ENCODE measurements at regions of chr22 and their contacts with region 1.

Region 1: DNA sequence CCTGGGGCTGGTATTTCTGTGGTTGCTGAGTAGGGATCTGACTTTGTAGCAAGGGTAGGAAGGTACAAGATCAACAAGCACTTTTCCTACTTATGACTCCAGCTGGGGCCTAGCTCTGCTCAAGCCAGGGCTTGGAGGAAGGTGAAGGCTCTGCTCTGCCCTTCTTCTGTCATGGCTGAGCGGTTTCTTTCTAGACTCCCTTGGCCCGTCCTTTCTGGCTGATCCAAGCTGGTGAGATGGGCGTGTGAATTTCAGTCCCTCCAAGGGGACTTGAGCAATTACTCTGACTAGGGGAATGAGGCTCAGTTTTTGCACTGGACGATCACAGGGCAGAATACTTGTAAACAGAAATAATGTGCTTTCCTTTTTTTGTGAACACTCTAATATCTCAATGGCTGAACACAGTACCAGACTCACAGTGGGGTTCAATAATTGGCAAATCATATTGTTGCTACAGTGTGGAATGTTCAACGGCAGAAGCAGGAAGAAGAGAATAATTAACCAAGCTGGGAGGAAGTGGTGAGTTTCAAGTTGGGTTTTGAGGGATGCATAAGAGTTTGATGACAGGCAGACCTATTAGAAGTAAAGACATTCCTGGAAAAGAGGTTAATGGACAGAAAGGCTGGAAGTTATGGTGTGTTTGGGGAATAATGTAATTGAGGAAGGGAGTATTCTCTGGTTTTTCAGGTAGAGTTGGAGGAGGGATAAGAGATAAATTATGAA is 507.6 kb downstream of the MIAT start:
- DNase-seq: no peak
- ATAC-seq: no peak
- H3K4me3 ChIP-seq: no peak overlapping the region
- H3K4me3 Mint-ChIP-seq: no peak overlapping the region
- H3K27ac ChIP-seq: no peak overlapping the region
- H3K27ac Mint-ChIP-seq: no peak overlapping the region
- H3K4me1 ChIP-seq: no peaks in the 10 kb centered on the region
- H3K4me1 Mint-ChIP-seq: no peaks in the 10 kb centered on the region
- H3K27me3 ChIP-seq: no peaks in the 10 kb centered on the region
- H3K27me3 Mint-ChIP-seq: peaks cover 21% of the 10 kb centered on the region
- CTCF ChIP-seq: no peak

Region 2: DNA sequence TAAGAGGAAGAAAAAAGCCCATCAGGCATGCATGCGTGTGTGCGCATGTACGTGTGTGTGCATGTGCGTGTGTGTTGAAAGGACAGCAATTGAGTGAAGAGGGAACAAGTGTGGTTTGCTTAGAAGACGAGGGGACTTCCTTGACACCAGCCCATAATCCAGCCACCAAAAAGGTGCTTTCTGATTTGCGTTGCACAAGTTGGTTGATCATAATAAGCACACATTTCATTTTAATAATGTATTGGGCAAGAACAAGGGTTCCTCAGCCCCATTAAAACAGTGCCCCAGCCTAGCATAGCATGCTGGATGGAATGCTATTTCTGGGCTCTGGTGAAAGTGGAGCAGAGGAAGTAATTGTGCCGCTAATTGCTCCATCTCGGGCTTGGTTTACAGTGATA is 14.4 kb before region 1 on chr22:
- CTCF ChIA-PET with region 1: no interaction called
- POLR2A ChIA-PET with region 1: no interaction called
- intact Hi-C with region 1: loop called in 1 of 2 experiments (anchors 1 kb)
- DNase-seq: peak in 3 of 14 experiments; percentile 8 to 71 (median 60)
- ATAC-seq: no peak
- H3K4me3 ChIP-seq: no peak overlapping the region
- H3K4me3 Mint-ChIP-seq: no peak overlapping the region
- H3K27ac ChIP-seq: no peak overlapping the region
- H3K27ac Mint-ChIP-seq: no peak overlapping the region
- H3K4me1 ChIP-seq: no peaks in the 10 kb centered on the region
- H3K4me1 Mint-ChIP-seq: no peaks in the 10 kb centered on the region
- H3K27me3 ChIP-seq: peaks cover 5 to 11% of the 10 kb centered on the region in 2 experiments
- H3K27me3 Mint-ChIP-seq: peaks cover 43% of the 10 kb centered on the region
- CTCF ChIP-seq: no peak

Region 3: GRCh38 chr22:27195094-27195493 is 30.2 kb after region 1 on chr22:
- CTCF ChIA-PET with region 1: no interaction called
- POLR2A ChIA-PET with region 1: no interaction called
- intact Hi-C with region 1: no loop called
- DNase-seq: no peak
- ATAC-seq: no peak
- H3K4me3 ChIP-seq: no peak overlapping the region
- H3K4me3 Mint-ChIP-seq: no peak overlapping the region
- H3K27ac ChIP-seq: no peak overlapping the region
- H3K27ac Mint-ChIP-seq: no peak overlapping the region
- H3K4me1 ChIP-seq: no peaks in the 10 kb centered on the region
- H3K4me1 Mint-ChIP-seq: no peaks in the 10 kb centered on the region
- H3K27me3 ChIP-seq: peaks cover 0 to 2% of the 10 kb centered on the region in 2 experiments
- H3K27me3 Mint-ChIP-seq: peaks cover 21% of the 10 kb centered on the region
- CTCF ChIP-seq: no peak